Naive thymus-derived CD4-positive, alpha-beta T cell (primary cell): ENCODE measurements at regions of chr4 and their contacts with region 1.

Region 1: DNA sequence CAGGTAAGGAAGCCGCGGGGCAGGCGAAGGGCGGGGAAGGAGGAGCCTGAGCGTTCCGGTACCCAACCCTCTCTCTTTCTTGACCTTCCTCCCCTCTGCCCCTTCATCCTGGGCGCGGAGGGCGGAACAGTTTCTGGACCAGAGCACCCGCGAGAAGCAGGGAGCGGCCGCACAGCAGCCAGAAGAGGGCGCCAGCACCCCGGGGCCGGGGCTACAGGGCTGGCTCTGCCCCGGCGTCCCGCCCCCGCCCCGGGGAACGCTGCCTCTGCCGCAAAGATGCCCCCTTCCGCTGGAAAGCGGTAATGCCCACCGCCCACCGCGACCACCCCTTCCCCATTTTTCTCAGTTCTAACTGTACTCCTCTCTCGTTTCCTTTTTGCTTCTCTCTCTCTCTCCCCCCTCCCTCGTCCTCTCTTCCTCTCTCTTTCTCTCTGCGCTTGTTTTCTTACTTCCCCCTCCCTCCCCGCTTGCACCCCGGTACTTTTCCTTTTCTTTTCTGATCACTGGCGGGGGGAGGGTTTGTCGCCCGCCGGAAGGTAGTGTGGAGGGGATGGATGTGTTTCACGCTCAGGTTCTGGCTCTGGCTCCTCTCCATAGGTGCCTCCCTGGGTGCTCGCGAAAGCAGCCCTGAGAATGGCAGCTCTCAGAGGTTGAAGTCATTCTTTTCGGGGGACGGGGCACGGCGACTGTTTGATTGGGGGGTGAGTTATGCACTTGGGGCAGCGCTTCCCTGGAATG is 13.1 kb upstream of the PRDM8 start:
- DNase-seq: peak; percentile 80 to 97 (median 91)
- ATAC-seq: peak; percentile 96
- H3K4me3 ChIP-seq: peak overlapping the region; percentile 98
- H3K4me3 Mint-ChIP-seq: peak overlapping the region; percentile 94 to 100 (median 96)
- H3K27ac ChIP-seq: peak overlapping the region; percentile 84
- H3K27ac Mint-ChIP-seq: peak overlapping the region; percentile 86 to 98 (median 94)
- H3K4me1 ChIP-seq: peaks cover 28 to 34% of the 10 kb centered on the region in 2 donors
- H3K4me1 Mint-ChIP-seq: peaks cover 26 to 56% (median 49%) of the 10 kb centered on the region in 7 donors
- H3K27me3 ChIP-seq: no peaks in the 10 kb centered on the region
- H3K27me3 Mint-ChIP-seq: peaks cover 0 to 34% (median 0%) of the 10 kb centered on the region in 5 donors

Region 2: GRCh38 chr4:78775303-78776030 is 1408.8 kb before region 1 on chr4:
- CTCF ChIA-PET with region 1: no interaction called
- POLR2A ChIA-PET with region 1: no interaction called
- intact Hi-C with region 1: loop called in 1 of 2 experiments (anchors 10 kb)
- DNase-seq: peak; percentile 80 to 93 (median 91)
- ATAC-seq: peak; percentile 81
- H3K4me3 ChIP-seq: peak overlapping the region; percentile 87
- H3K4me3 Mint-ChIP-seq: peak overlapping the region; percentile 88 to 97 (median 96)
- H3K27ac ChIP-seq: peak overlapping the region; percentile 78
- H3K27ac Mint-ChIP-seq: peak overlapping the region; percentile 84 to 98 (median 95)
- H3K4me1 ChIP-seq: peaks cover 4 to 14% of the 10 kb centered on the region in 2 donors
- H3K4me1 Mint-ChIP-seq: peaks cover 7 to 34% (median 13%) of the 10 kb centered on the region in 7 donors
- H3K27me3 ChIP-seq: no peaks in the 10 kb centered on the region
- H3K27me3 Mint-ChIP-seq: no peaks in the 10 kb centered on the region

Region 3: GRCh38 chr4:80007745-80008149 is 176.5 kb before region 1 on chr4:
- CTCF ChIA-PET with region 1: interaction called, 3 read pairs
- POLR2A ChIA-PET with region 1: no interaction called
- intact Hi-C with region 1: loop called in 1 of 2 experiments (anchors 5 kb)
- DNase-seq: no peak
- ATAC-seq: no peak
- H3K4me3 ChIP-seq: no peak overlapping the region
- H3K4me3 Mint-ChIP-seq: peak overlapping the region in 1 of 10 donors; percentile 43
- H3K27ac ChIP-seq: no peak overlapping the region
- H3K27ac Mint-ChIP-seq: peak overlapping the region in 3 of 9 donors; percentile 5 to 86 (median 56)
- H3K4me1 ChIP-seq: peaks cover 12 to 22% of the 10 kb centered on the region in 2 donors
- H3K4me1 Mint-ChIP-seq: peaks cover 19 to 59% (median 44%) of the 10 kb centered on the region in 7 donors
- H3K27me3 ChIP-seq: no peaks in the 10 kb centered on the region
- H3K27me3 Mint-ChIP-seq: no peaks in the 10 kb centered on the region

Region 4: DNA sequence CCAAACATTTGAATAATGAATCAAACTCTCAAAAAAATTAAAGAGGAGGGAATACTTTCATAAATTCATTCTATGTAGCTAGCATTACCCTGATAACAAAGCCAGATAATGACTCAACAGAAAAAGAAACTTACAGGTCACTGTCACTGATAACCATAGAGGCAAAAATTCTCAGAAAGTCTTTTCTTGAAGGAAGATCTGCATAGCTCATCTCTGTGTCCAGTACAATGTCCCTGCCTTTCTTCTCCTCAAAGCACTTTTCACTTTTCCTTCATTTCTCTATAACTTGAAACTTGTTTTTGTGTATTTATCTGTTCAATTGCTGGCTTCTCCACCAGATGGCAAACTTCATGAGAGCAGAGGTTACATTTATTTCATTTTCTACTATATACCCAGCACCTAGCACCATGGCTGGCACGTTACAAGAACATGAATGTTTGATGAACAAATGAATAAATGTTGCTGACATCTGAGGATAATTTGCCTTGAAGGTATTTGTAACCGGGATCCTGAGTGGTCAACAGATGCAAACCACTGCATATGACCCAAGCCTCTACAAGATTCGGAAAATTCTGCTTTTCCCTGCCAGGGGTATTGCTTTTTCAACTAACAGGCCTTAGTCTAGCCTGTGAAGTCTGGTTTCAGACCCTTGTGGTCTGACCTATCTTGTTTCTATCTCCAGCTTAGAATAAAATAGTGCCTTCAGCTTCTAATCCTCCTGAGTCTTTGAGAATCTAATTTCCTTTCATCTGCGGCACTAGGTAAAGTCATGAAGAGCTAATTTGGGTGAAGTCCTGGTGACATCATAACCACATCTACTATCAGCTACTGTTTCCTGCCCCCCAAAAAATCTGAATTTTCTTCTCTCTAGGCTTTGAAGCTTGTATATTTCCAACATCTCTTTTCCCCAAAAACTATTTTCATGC is 58.7 kb before region 1 on chr4:
- CTCF ChIA-PET with region 1: interaction called, 154 read pairs
- POLR2A ChIA-PET with region 1: interaction called, 95 read pairs
- intact Hi-C with region 1: loop called (anchors 1 kb)
- DNase-seq: peak in 8 of 9 donors; percentile 7 to 75 (median 64)
- ATAC-seq: peak; percentile 88
- H3K4me3 ChIP-seq: peak overlapping the region; percentile 0
- H3K4me3 Mint-ChIP-seq: peak overlapping the region; percentile 1 to 68 (median 52)
- H3K27ac ChIP-seq: peak overlapping the region; percentile 84
- H3K27ac Mint-ChIP-seq: peak overlapping the region; percentile 83 to 95 (median 89)
- H3K4me1 ChIP-seq: peaks cover 34 to 42% of the 10 kb centered on the region in 2 donors
- H3K4me1 Mint-ChIP-seq: peaks cover 25 to 57% (median 54%) of the 10 kb centered on the region in 7 donors
- H3K27me3 ChIP-seq: no peaks in the 10 kb centered on the region
- H3K27me3 Mint-ChIP-seq: peaks cover 0 to 2% (median 0%) of the 10 kb centered on the region in 5 donors

Region 5: GRCh38 chr4:80165855-80166254 is 18.4 kb before region 1 on chr4:
- CTCF ChIA-PET with region 1: interaction called, 66 read pairs
- POLR2A ChIA-PET with region 1: interaction called, 85 read pairs
- intact Hi-C with region 1: loop called in 1 of 2 experiments (anchors 2 kb)
- DNase-seq: no peak
- ATAC-seq: no peak
- H3K4me3 ChIP-seq: no peak overlapping the region
- H3K4me3 Mint-ChIP-seq: no peak overlapping the region
- H3K27ac ChIP-seq: no peak overlapping the region
- H3K27ac Mint-ChIP-seq: peak overlapping the region in 3 of 9 donors; percentile 37 to 49 (median 48)
- H3K4me1 ChIP-seq: peaks cover 0 to 8% of the 10 kb centered on the region in 2 donors
- H3K4me1 Mint-ChIP-seq: peaks cover 0 to 28% (median 10%) of the 10 kb centered on the region in 7 donors
- H3K27me3 ChIP-seq: no peaks in the 10 kb centered on the region
- H3K27me3 Mint-ChIP-seq: peaks cover 0 to 20% (median 0%) of the 10 kb centered on the region in 5 donors

Region 6: DNA sequence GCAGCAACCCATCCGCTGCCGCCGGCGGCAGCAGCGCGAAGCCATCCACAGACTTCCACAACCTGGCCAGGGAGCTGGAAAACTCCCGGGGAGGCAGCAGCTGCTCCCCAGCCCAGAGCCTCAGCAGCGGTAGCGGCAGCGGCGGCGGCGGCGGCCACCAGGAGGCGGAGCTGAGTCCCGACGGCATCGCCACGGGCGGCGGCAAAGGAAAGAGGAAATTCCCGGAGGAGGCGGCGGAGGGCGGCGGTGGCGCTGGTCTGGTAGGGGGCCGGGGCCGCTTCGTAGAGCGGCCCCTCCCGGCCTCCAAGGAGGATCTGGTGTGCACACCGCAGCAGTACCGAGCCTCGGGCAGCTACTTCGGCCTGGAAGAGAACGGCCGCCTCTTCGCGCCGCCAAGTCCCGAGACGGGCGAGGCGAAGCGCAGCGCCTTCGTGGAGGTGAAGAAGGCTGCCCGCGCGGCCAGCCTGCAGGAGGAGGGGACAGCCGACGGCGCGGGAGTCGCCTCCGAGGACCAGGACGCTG is 18.0 kb after region 1 on chr4:
- CTCF ChIA-PET with region 1: interaction called, 24 read pairs
- POLR2A ChIA-PET with region 1: interaction called, 34 read pairs
- intact Hi-C with region 1: loop called (anchors 1 kb)
- DNase-seq: peak; percentile 55 to 86 (median 70)
- ATAC-seq: peak; percentile 78
- H3K4me3 ChIP-seq: peak overlapping the region; percentile 63
- H3K4me3 Mint-ChIP-seq: peak overlapping the region; percentile 79 to 91 (median 84)
- H3K27ac ChIP-seq: peak overlapping the region; percentile 75
- H3K27ac Mint-ChIP-seq: peak overlapping the region in 8 of 9 donors; percentile 2 to 86 (median 76)
- H3K4me1 ChIP-seq: peaks cover 5 to 8% of the 10 kb centered on the region in 2 donors
- H3K4me1 Mint-ChIP-seq: peaks cover 18 to 30% (median 27%) of the 10 kb centered on the region in 7 donors
- H3K27me3 ChIP-seq: no peaks in the 10 kb centered on the region
- H3K27me3 Mint-ChIP-seq: peaks cover 12 to 53% (median 12%) of the 10 kb centered on the region in 5 donors

Region 7: DNA sequence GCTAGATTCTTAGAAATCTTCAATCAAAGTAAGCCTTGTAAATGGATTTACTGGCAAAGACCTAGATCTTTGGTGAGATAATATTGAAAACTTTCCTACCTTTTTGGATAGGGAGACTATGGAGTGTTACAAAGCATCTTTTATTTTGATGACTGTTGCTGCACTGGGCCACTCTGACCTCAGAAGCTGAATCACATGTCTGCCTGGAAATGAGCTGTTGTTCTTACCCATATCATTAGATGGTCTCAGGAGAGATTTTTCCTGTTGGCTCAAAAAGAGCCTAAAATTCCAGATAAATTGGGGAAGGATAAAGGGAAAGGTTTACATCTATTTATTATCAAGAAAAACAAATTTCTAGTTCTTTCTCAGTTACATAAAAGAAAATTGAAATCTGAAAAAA is 718.8 kb after region 1 on chr4:
- CTCF ChIA-PET with region 1: no interaction called
- POLR2A ChIA-PET with region 1: no interaction called
- intact Hi-C with region 1: no loop called
- DNase-seq: no peak
- ATAC-seq: no peak
- H3K4me3 ChIP-seq: no peak overlapping the region
- H3K4me3 Mint-ChIP-seq: no peak overlapping the region
- H3K27ac ChIP-seq: no peak overlapping the region
- H3K27ac Mint-ChIP-seq: no peak overlapping the region
- H3K4me1 ChIP-seq: no peaks in the 10 kb centered on the region
- H3K4me1 Mint-ChIP-seq: no peaks in the 10 kb centered on the region
- H3K27me3 ChIP-seq: no peaks in the 10 kb centered on the region
- H3K27me3 Mint-ChIP-seq: no peaks in the 10 kb centered on the region

Region 8: GRCh38 chr4:81494031-81494431 is 1309.8 kb after region 1 on chr4:
- CTCF ChIA-PET with region 1: no interaction called
- POLR2A ChIA-PET with region 1: no interaction called
- intact Hi-C with region 1: loop called in 1 of 2 experiments (anchors 5 kb)
- DNase-seq: peak in 4 of 9 donors; percentile 29 to 46 (median 38)
- ATAC-seq: peak; percentile 33
- H3K4me3 ChIP-seq: peak overlapping the region; percentile 47
- H3K4me3 Mint-ChIP-seq: peak overlapping the region; percentile 47 to 82 (median 76)
- H3K27ac ChIP-seq: peak overlapping the region; percentile 66
- H3K27ac Mint-ChIP-seq: peak overlapping the region; percentile 76 to 99 (median 94)
- H3K4me1 ChIP-seq: peaks cover 27 to 39% of the 10 kb centered on the region in 2 donors
- H3K4me1 Mint-ChIP-seq: peaks cover 27 to 62% (median 49%) of the 10 kb centered on the region in 7 donors
- H3K27me3 ChIP-seq: no peaks in the 10 kb centered on the region
- H3K27me3 Mint-ChIP-seq: peaks cover 0 to 8% (median 0%) of the 10 kb centered on the region in 5 donors